ENCODE measurements at regions of chr6 and their contacts with region 1.

Region 1: DNA sequence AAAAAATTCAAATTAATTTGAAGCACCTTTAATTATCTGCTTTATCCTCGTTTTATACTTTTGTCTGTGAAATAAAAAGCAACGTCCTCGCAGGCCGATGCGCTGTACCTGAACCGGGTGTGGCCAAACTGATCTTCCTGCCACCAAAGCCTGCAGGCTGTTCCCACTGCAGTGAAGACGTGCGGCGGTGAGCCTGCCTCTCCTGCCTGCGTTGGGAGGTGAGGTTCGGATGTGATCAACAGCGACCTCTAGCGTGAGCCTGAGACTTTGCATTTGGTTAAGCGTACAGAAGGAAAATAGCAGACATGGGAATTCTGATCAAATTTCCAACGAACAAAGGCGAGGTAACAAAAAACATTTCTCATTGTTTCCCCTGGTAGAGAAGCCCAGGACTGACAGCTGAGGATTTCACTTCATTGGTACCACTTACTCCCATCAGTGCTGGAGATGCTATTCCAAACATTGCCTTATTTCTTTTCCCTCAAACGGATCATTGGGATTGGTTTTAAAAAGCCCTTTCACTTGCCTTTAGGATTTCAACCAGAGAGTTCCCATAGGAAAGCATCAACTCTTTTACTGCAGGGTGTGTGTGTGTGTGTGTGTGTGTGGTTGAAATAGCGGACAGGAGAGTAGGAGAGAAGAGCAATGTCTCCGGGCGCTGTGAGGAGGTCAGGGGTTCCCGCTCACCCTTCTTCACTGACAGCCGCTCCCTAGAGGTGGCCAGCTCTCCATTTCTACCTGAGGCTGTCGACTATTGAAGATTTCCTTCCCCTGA is 56.6 kb upstream of the CCN6 start:
- DNase-seq: peak; percentile 66 to 83
- H3K4me3 ChIP-seq: peak overlapping the region; percentile 7 to 52 (median 20)
- H3K27ac ChIP-seq: peak overlapping the region; percentile 4 to 82
- H3K4me1 ChIP-seq: no peaks in the 10 kb centered on the region
- H3K27me3 ChIP-seq: no peaks in the 10 kb centered on the region
- CTCF ChIP-seq: peak; percentile 83 to 97 (median 94)
- POLR2A ChIP-seq: no peak

Region 2: DNA sequence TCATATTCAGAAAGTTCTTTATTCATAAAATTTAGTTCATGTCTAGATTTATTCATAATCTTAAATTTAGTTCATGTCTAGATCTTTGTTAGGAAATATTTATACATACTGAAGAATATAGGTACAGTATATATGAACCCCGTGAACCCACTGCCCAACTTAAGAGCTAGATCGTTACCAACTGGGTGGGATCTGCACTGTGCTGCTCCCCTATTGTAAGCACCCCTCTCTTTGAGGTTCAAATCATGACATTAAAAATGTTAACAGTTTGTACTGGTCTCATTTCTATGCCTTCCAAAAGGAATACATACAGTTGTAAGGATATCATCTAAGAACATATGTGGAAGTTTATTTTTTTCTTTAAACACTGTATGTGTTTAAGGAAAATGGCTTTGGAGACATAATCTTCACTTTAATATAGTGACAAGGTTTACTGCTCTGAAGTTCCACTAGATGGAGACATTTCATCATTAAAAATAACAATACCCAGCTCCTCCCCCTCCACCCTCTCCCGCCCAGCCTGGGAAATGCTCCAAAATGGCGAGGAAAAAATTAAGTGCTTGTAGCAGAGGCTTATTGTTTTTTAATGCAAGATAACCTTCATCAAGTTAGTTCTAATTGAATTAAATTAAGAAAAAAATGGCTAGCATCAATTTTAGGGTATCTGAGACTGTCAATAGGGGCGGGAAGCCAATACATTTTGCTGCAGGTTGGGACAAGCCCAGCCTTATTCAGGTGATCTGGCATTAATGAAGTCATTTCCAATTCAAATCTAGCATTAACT is 287.5 kb before region 1 on chr6:
- intact Hi-C with region 1: loop called (anchors 10 kb)
- DNase-seq: peak; percentile 57 to 60
- H3K4me3 ChIP-seq: peak overlapping the region in 2 of 3 donors; percentile 15 to 45
- H3K27ac ChIP-seq: peak overlapping the region in 1 of 2 donors; percentile 49
- H3K4me1 ChIP-seq: peaks cover 0 to 2% of the 10 kb centered on the region in 2 donors
- H3K27me3 ChIP-seq: no peaks in the 10 kb centered on the region
- CTCF ChIP-seq: peak; percentile 62 to 92 (median 91)
- POLR2A ChIP-seq: no peak